Ovary (tissue), 10 donors: ENCODE measurements at regions of chr14 and their contacts with region 1.

Region 1: GRCh38 chr14:76022991-76023390 is 37.4 kb downstream of the IFT43 start:
- DNase-seq: no peak
- H3K4me3 ChIP-seq: no peak overlapping the region
- H3K27ac ChIP-seq: no peak overlapping the region
- H3K4me1 ChIP-seq: peaks cover 1% of the 10 kb centered on the region
- H3K27me3 ChIP-seq: no peaks in the 10 kb centered on the region
- CTCF ChIP-seq: no peak
- EP300 ChIP-seq: no peak
- POLR2A ChIP-seq: no peak

Region 2: GRCh38 chr14:76045773-76046172 is 22.8 kb after region 1 on chr14:
- intact Hi-C with region 1: loop called in 1 of 4 experiments (anchors 2 kb)
- DNase-seq: no peak
- H3K4me3 ChIP-seq: no peak overlapping the region
- H3K27ac ChIP-seq: no peak overlapping the region
- H3K4me1 ChIP-seq: peaks cover 2% of the 10 kb centered on the region
- H3K27me3 ChIP-seq: no peaks in the 10 kb centered on the region
- CTCF ChIP-seq: no peak
- EP300 ChIP-seq: no peak
- POLR2A ChIP-seq: no peak

Region 3: GRCh38 chr14:76138758-76139723 is 116.0 kb after region 1 on chr14:
- intact Hi-C with region 1: no loop called
- DNase-seq: no peak
- H3K4me3 ChIP-seq: peak overlapping the region; percentile 6
- H3K27ac ChIP-seq: no peak overlapping the region
- H3K4me1 ChIP-seq: no peaks in the 10 kb centered on the region
- H3K27me3 ChIP-seq: no peaks in the 10 kb centered on the region
- CTCF ChIP-seq: no peak
- EP300 ChIP-seq: no peak
- POLR2A ChIP-seq: no peak

Region 4: DNA sequence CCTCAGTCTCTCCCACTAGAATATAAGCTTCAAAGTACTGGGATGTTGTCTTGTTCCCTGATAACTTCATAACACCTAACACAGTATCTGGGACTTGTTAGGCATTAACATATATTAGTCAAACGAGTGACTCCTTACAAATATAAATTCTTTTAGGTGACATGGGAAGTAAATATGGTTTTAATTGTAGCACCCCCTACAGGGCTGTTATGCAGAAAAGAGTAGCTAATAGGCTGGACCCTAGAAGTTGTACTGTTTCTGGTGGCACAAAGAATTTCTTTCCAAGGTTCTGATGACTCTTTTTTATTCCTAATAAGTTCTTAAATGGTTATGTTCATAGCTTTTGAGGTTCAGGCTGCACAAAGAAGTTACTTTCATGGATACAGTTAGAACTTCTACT is 158.6 kb after region 1 on chr14:
- intact Hi-C with region 1: no loop called
- DNase-seq: no peak
- H3K4me3 ChIP-seq: no peak overlapping the region
- H3K27ac ChIP-seq: no peak overlapping the region
- H3K4me1 ChIP-seq: no peaks in the 10 kb centered on the region
- H3K27me3 ChIP-seq: no peaks in the 10 kb centered on the region
- CTCF ChIP-seq: no peak
- EP300 ChIP-seq: no peak
- POLR2A ChIP-seq: no peak

Region 5: GRCh38 chr14:76203086-76204001 is 180.4 kb after region 1 on chr14:
- intact Hi-C with region 1: no loop called
- DNase-seq: peak; percentile 37 to 50 (median 48)
- H3K4me3 ChIP-seq: no peak overlapping the region
- H3K27ac ChIP-seq: no peak overlapping the region
- H3K4me1 ChIP-seq: peaks cover 3% of the 10 kb centered on the region
- H3K27me3 ChIP-seq: no peaks in the 10 kb centered on the region
- CTCF ChIP-seq: no peak
- EP300 ChIP-seq: no peak
- POLR2A ChIP-seq: no peak